Activated CD4-positive, alpha-beta memory T cell treated with anti-CD3 and anti-CD28 coated beads for 36 hours (primary cell): ENCODE measurements at regions of chr2 and their contacts with region 1.

Region 1: DNA sequence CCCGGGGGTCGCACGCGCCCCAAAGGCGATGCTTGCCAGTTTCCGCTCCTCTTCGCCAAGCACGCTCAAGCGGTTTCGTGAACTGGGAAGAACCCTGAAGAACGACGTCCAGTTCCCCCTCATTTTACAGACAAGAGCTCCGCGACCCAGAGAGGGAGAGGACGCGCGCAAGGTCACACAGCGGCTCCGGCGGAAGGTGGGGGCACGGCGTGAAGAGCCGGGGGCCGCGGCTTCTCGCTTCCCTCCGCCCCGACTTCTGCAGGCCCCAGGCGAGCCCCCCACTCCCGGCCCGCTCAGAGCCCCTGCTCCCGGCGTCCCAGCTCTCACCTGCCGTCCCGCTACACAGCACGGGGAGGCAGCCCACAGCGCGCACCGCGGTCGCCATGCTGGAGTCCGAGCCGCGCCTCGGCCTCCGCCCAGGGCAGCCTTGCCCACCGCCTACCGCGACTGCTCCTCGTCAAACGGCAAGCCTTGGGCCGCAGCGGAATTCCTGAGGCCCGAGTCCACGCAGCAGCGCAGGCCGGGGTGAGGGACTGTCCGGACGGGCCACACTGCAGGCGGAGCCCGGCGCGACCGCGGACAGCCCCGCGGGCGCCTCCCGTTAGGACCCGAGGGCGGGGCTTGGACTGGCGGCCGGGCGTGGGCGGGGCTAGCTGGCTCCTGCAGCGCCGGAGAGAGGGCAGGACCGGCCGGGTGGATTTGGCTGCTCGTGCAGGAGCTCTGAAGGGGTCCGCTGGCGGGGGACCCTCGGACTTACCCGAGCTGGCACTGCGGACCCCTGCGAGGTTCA is at the start of gene MRPS5:
- DNase-seq: peak; percentile 90
- H3K4me3 Mint-ChIP-seq: peak within 1 kb of the TSS; percentile 90
- H3K27ac Mint-ChIP-seq: peak within 1 kb of the TSS; percentile 91
- H3K4me1 Mint-ChIP-seq: peaks cover 43% of the 10 kb centered on the region
- H3K27me3 Mint-ChIP-seq: no peaks in the 10 kb centered on the region
- total RNA-seq, gene MRPS5: 79.3 to 82.3 TPM

Region 2: DNA sequence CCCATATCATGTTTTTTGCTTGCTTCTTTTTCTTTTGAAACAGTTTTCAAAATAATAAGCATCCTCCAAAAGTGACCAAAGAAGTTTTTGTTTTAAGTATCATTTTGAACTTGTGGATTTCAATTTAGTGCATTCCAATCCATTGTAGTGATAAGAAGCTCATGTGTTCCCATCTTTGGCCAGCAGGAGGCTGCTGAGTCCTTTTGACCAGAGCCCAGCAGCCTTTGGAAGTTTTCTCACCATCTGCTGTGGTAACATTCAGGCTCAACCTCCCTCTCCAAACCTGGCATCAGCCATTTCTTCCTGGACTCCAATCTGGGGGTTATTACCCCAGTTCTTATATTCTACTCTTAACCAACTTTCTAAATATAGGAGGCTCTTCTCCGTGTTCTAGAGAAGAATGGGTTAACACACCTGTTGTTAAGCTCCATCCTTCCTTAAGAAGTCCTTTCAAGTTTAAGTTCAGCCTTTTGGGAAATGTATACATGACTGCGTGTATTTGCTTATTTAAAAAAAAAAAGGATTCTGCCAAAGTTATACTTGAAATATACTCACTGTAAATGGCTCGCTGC is 135.1 kb before region 1 on chr2:
- CTCF ChIA-PET with region 1: no interaction called
- POLR2A ChIA-PET with region 1: no interaction called
- intact Hi-C with region 1: no loop called
- DNase-seq: peak; percentile 57
- H3K4me3 Mint-ChIP-seq: no peak overlapping the region
- H3K27ac Mint-ChIP-seq: no peak overlapping the region
- H3K4me1 Mint-ChIP-seq: no peaks in the 10 kb centered on the region
- H3K27me3 Mint-ChIP-seq: peaks cover 12% of the 10 kb centered on the region

Region 3: DNA sequence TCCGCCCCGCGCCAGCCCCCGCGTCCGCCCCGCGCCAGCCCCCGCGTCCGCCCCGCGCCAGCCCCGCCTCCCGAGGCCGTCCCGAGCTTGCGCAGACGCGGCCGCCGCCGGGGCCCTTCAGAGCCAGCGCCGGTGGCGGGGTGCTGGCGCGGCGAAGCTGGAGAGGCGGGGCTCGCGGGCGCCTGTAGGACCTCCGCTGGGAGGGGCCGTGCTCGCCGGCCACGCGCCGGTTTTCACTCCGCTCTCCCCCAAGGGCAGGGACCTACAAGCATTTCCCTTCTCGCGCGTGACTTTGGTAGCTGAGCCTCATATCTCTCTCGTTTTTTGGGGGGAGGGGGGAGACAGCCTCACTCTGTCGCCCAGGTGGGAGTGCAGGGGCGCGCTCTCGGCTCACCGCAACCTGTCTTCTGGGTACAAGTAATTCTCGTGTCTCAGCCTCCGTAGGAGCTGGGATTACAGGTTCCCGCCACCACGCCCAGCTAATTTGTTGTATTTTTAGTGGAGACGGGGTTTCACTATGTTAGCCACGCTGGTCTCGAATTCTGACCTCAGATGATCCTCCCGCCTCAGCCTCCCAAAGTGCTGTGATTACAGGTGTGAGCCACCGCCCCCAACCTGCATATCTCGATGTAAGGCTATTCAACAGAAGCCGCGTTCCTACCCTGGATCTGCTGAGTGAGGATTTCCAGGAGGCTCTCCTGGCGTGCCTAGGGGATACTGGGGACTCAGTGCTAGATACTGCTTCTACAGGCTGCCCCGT is 38.3 kb after region 1 on chr2 and contains the start of gene ZNF514:
- CTCF ChIA-PET with region 1: interaction called, 9 read pairs
- POLR2A ChIA-PET with region 1: interaction called, 18 read pairs
- intact Hi-C with region 1: loop called (anchors 1 kb)
- DNase-seq: peak; percentile 76
- H3K4me3 Mint-ChIP-seq: peak within 1 kb of the TSS; percentile 82
- H3K27ac Mint-ChIP-seq: peak within 1 kb of the TSS; percentile 62
- H3K4me1 Mint-ChIP-seq: peaks cover 20% of the 10 kb centered on the region
- H3K27me3 Mint-ChIP-seq: no peaks in the 10 kb centered on the region
- total RNA-seq, gene ZNF514: 10.8 to 11.6 TPM

Region 4: GRCh38 chr2:95165129-95166064 is 43.8 kb after region 1 on chr2 and contains the start of gene ZNF2:
- CTCF ChIA-PET with region 1: interaction called, 5 read pairs
- POLR2A ChIA-PET with region 1: interaction called, 18 read pairs
- intact Hi-C with region 1: loop called (anchors 1 kb)
- DNase-seq: peak; percentile 98
- H3K4me3 Mint-ChIP-seq: peak within 1 kb of the TSS; percentile 100
- H3K27ac Mint-ChIP-seq: peak within 1 kb of the TSS; percentile 93
- H3K4me1 Mint-ChIP-seq: peaks cover 34% of the 10 kb centered on the region
- H3K27me3 Mint-ChIP-seq: no peaks in the 10 kb centered on the region
- total RNA-seq, gene ZNF2: 3.9 to 4.4 TPM

Region 5: DNA sequence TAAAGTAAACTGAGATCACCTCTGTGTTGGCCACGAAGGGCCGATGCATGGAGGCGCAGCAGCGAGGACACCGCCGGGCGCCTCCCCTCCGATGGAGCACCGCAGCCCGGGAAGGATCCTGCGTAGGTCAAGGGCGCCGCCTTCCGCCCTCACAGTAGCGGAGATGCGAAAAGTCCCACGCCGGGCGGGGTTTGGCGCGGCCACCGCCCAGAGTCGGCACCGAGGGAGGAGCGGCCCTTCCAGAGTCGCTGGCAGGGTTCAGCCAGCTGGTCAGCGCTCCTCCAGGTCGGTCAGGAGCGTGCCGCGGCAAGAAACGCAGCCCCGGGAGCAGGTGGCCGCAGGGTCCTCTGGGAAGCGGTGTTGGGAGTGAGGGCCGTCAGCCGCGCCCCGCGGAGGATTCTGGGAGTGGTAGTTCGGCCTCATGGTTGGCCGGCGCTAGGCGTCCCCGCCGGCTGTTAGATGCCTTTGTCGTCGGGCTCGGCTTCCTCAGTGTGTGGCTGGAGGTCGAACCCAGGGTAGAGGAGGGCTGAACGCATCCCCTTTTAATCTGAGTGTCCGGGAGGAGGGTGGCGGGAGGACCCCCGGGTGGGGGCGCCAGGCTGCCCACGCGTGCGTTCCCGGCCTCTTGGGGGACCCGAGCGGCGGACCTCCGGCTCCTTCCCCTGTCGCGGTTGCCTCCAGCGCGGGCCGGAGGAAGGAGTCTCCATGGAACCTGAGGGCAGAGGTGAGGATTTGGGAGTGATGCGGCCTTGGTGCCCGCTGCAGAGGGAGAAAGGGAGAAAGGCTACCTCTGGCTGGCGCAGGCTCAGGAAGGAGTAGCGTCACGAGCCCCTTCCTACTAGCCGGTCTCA is 85.7 kb after region 1 on chr2 and contains the start of gene ZNF892:
- CTCF ChIA-PET with region 1: no interaction called
- POLR2A ChIA-PET with region 1: no interaction called
- intact Hi-C with region 1: loop called (anchors 1 kb)
- DNase-seq: peak; percentile 88
- H3K4me3 Mint-ChIP-seq: peak within 1 kb of the TSS; percentile 89
- H3K27ac Mint-ChIP-seq: peak within 1 kb of the TSS; percentile 30
- H3K4me1 Mint-ChIP-seq: peaks cover 15% of the 10 kb centered on the region
- H3K27me3 Mint-ChIP-seq: no peaks in the 10 kb centered on the region
- total RNA-seq, gene ZNF892: 2.7 to 3.3 TPM

Region 6: GRCh38 chr2:95296880-95297487 is 175.4 kb after region 1 on chr2 and contains the start of gene KCNIP3:
- CTCF ChIA-PET with region 1: no interaction called
- POLR2A ChIA-PET with region 1: no interaction called
- intact Hi-C with region 1: no loop called
- DNase-seq: no peak
- H3K4me3 Mint-ChIP-seq: no peak within 1 kb of the TSS
- H3K27ac Mint-ChIP-seq: no peak within 1 kb of the TSS
- H3K4me1 Mint-ChIP-seq: no peaks in the 10 kb centered on the region
- H3K27me3 Mint-ChIP-seq: peaks cover 2% of the 10 kb centered on the region
- total RNA-seq, gene KCNIP3: not detected